Activated naive CD4-positive, alpha-beta T cell treated with anti-CD3 and anti-CD28 coated beads, Interleukin-2, amount 10 ng/mL, durations not matched to agents 7 days and 5 days (primary cell): ENCODE measurements at regions of chr2 and their contacts with region 1.

Region 1: GRCh38 chr2:143259368-143259958 is 130.2 kb downstream of the ARHGAP15 start:
- DNase-seq: peak; percentile 83
- H3K4me3 Mint-ChIP-seq: peak overlapping the region; percentile 65
- H3K27ac Mint-ChIP-seq: peak overlapping the region; percentile 96
- H3K4me1 Mint-ChIP-seq: peaks cover 81% of the 10 kb centered on the region
- H3K27me3 Mint-ChIP-seq: no peaks in the 10 kb centered on the region

Region 2: GRCh38 chr2:143034292-143035074 is 225.0 kb before region 1 on chr2:
- CTCF ChIA-PET with region 1: interaction called, 14 read pairs
- DNase-seq: peak; percentile 70
- H3K4me3 Mint-ChIP-seq: no peak overlapping the region
- H3K27ac Mint-ChIP-seq: no peak overlapping the region
- H3K4me1 Mint-ChIP-seq: peaks cover 9% of the 10 kb centered on the region
- H3K27me3 Mint-ChIP-seq: peaks cover 3% of the 10 kb centered on the region

Region 3: DNA sequence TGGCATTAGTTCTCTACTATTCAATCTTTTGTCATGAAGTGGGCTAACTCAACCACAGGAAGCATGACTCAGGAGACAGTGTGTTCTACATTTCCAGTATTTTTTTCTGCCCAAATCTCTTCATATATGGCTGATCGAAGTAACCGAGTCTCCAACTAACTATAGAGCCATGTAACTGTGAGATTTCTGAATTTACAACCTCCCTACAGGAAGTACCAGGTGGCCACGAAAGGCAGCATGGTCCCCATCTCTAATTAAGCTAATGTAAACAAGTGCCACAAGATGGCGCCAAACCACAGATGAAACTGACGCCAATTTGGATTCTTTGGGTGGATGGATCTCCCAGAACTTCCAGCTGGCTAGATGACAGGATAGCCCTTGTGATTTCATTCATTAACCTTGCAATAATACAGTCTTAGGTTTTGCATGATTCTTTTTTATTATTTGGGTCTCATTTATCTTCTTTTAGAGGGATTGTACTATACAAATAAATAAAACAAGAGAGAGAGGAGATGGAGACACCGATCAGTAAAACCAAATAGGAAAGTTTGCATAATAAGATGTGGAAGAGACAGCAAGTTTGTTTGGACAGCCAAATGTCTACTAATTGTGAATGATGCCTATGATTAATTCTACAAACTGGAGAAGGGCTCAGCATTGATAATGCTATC is 148.6 kb before region 1 on chr2:
- CTCF ChIA-PET with region 1: interaction called, 85 read pairs
- DNase-seq: peak; percentile 76
- H3K4me3 Mint-ChIP-seq: no peak overlapping the region
- H3K27ac Mint-ChIP-seq: peak overlapping the region; percentile 44
- H3K4me1 Mint-ChIP-seq: peaks cover 44% of the 10 kb centered on the region
- H3K27me3 Mint-ChIP-seq: no peaks in the 10 kb centered on the region

Region 4: DNA sequence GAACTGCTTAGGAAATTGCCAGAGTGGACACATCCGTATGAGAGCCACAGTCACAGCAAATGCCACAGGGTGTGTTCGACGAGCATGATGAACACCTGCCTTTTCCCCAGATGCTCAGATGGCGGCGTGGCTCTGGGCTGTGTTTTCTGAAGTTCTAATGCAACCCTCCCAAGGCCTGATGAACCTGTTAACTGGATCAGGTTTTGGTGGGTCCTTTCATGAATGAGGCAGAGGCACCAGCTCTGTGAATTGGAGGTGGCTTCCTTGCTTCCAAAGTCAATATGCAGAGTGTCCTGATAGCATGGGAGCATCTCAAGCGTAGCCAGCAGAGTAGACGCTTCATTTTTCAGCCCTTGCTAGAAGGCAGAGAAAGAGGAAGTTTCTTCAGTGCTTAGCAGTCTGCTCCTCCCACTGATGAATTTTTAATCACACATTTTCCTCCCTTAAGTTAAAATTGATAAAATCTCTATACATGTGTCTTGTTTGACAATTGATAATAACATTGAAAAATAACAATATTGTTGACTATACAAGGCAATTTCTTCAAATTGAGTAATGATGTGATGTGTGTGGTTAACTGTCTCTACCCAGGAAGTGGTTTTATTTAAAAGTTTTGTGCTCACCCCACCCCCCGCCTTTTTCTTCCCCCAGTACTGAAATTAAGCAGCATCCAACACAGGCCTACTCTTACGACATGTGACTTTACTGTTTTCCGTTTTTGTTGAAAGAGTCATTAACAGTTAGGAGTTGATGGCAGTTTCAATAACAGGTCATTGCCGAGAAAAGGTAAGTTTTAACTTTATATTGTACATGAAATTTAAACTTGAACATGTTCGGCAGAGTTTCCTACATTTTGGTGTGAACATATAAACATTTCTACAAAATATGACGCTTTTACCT is 130.5 kb before region 1 on chr2 and contains the start of gene ARHGAP15:
- CTCF ChIA-PET with region 1: interaction called, 23 read pairs
- DNase-seq: peak; percentile 84
- H3K4me3 Mint-ChIP-seq: peak within 1 kb of the TSS; percentile 74
- H3K27ac Mint-ChIP-seq: peak within 1 kb of the TSS; percentile 100
- H3K4me1 Mint-ChIP-seq: peaks cover 44% of the 10 kb centered on the region
- H3K27me3 Mint-ChIP-seq: no peaks in the 10 kb centered on the region

Region 5: DNA sequence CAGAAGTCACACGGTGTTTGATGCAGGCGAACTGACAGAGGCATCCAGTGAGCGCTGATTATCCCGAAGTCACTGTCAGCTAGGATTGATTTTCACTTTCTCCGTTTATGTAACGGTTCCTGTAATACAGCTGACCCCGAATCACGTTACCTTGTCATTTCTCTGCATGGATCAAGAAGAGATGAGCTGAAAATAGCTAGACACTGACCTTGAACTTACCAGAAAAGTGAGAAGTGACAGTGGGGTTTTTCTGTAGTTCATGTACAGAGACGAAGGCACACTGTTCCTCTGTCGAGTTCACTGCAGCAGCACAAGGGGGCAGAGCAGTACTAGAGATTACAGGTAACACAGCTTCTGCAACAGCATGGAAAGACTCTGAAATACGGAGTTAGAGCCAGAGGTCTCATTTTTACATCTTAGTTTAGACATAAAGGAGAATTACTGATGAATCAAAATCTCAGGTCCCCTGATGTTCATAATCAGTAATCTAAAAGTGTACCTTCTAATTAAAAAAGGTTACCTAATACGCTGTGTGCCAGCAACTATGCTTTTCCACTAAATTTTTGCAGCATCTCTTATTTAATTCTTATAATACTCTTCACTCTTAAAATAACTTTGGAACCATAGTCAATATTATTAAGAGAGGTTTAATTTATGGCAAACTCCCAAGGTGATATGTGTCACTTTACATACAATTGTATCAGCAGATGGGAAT is 97.2 kb before region 1 on chr2:
- CTCF ChIA-PET with region 1: interaction called, 37 read pairs
- DNase-seq: peak; percentile 70
- H3K4me3 Mint-ChIP-seq: no peak overlapping the region
- H3K27ac Mint-ChIP-seq: peak overlapping the region; percentile 8
- H3K4me1 Mint-ChIP-seq: peaks cover 75% of the 10 kb centered on the region
- H3K27me3 Mint-ChIP-seq: no peaks in the 10 kb centered on the region

Region 6: GRCh38 chr2:143205106-143205764 is 54.2 kb before region 1 on chr2:
- CTCF ChIA-PET with region 1: interaction called, 50 read pairs
- DNase-seq: peak; percentile 37
- H3K4me3 Mint-ChIP-seq: no peak overlapping the region
- H3K27ac Mint-ChIP-seq: peak overlapping the region; percentile 86
- H3K4me1 Mint-ChIP-seq: peaks cover 47% of the 10 kb centered on the region
- H3K27me3 Mint-ChIP-seq: no peaks in the 10 kb centered on the region

Region 7: DNA sequence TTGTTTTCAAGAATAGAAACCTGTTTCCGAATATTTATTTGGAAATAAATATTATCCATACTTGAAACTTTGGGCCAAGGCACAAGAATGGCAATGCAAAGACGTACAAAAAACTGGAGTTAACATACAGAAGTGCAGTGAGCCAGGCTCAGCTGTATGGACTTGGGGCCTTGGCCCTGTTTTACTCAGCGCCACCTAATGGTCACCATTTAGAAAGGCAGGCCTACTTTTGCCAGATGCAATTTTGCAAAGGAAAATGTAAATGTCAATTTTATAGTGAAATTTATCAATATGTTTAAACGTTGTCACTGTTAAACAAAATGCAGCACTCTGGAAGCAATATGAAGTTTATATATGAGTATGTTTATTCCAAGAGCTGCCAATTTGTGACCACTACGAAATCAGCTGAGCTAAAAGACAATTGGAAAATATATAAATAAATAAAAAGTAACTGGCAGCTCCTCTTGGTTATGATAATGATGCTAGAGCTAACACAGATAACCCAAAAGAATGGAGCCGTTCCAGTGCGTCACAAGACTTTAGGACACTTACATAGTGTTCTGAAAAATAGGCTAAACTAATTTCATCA is 24.7 kb after region 1 on chr2:
- CTCF ChIA-PET with region 1: interaction called, 13 read pairs
- DNase-seq: peak; percentile 41
- H3K4me3 Mint-ChIP-seq: no peak overlapping the region
- H3K27ac Mint-ChIP-seq: no peak overlapping the region
- H3K4me1 Mint-ChIP-seq: peaks cover 12% of the 10 kb centered on the region
- H3K27me3 Mint-ChIP-seq: no peaks in the 10 kb centered on the region